ENCODE measurements at regions of chr6 and their contacts with region 1.

Region 1: DNA sequence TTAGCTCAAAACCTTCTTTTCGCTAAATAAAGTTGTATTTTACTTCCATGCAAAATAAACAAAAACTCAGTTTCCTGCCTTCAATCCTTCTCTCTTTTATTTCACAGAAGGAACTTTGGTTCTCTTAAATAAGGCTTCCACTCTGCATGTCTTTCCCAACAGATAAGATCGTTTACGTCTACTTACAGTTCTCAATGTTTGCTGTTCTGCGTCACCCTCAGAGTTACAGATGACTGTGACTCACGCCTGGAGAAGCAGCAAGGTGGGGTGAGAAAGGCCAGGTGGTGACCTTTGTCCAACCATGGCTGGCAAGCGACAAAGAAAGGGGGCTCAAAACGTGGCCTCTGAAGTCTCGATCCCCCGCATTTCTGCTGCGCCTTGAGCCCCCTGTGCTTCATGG is 51.4 kb upstream of the RPS6KA2 start:
- DNase-seq: peak; percentile 46 to 94
- H3K4me3 ChIP-seq: no peak overlapping the region; the same call in 1 of the 2 replicates
- H3K27ac ChIP-seq: peak overlapping the region; percentile 84
- H3K4me1 ChIP-seq: peaks cover 38% of the 10 kb centered on the region
- H3K27me3 ChIP-seq: no peaks in the 10 kb centered on the region
- CTCF ChIP-seq: no peak

Region 2: DNA sequence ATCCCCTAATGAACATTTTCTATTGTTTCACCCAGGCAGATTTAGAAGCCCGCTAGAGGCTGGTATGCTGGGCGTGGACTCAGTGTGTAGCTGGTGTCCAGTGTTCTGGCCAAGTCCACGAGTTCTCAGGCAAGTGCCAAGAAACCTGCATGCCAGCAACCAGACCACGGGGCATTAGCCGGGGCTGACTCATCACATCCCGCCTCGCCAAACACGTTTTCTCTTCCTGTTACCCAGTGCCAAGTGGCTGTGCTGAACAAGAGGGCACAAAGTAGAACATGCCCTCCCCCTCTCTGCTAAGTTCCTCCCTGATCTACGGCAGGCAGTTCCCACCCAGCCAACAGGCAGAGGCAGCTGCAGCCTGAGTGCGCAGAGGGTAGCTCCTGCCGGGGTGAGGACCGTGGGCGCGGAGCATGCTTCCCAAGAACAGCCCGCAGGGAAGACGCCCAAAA is 121.5 kb before region 1 on chr6:
- CTCF ChIA-PET with region 1: no interaction called
- POLR2A ChIA-PET with region 1: no interaction called
- intact Hi-C with region 1: loop called (anchors 1 kb)
- DNase-seq: peak; percentile 94 to 98
- H3K4me3 ChIP-seq: peak overlapping the region; percentile 43; the same call in 1 of the 2 replicates
- H3K27ac ChIP-seq: peak overlapping the region; percentile 88
- H3K4me1 ChIP-seq: peaks cover 34% of the 10 kb centered on the region
- H3K27me3 ChIP-seq: no peaks in the 10 kb centered on the region
- CTCF ChIP-seq: no peak

Region 3: DNA sequence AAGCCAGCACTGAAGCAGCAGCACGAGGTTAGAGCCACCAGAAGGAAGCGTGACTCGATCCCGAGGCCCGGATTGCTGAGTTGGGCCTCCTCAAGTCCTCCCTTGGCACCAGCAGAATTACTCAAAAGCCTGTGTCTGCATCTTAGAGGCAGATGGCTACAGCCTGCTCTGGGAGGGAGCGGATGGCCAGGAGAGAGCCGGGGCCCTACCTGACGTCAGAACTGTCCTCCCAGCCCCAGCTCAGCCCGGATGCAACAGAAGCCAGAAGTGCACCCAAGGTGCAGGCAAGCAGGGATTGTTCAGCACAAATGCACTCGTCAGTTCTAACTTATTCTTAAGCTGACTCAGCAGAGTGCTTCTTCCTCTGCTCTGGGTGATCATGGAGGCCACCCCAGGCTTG is 104.1 kb after region 1 on chr6:
- CTCF ChIA-PET with region 1: no interaction called
- POLR2A ChIA-PET with region 1: no interaction called
- intact Hi-C with region 1: no loop called
- DNase-seq: no peak
- H3K4me3 ChIP-seq: no peak overlapping the region
- H3K27ac ChIP-seq: no peak overlapping the region
- H3K4me1 ChIP-seq: no peaks in the 10 kb centered on the region
- H3K27me3 ChIP-seq: no peaks in the 10 kb centered on the region
- CTCF ChIP-seq: no peak